ENCODE measurements at regions of chr17 and their contacts with region 1.

Region 1: DNA sequence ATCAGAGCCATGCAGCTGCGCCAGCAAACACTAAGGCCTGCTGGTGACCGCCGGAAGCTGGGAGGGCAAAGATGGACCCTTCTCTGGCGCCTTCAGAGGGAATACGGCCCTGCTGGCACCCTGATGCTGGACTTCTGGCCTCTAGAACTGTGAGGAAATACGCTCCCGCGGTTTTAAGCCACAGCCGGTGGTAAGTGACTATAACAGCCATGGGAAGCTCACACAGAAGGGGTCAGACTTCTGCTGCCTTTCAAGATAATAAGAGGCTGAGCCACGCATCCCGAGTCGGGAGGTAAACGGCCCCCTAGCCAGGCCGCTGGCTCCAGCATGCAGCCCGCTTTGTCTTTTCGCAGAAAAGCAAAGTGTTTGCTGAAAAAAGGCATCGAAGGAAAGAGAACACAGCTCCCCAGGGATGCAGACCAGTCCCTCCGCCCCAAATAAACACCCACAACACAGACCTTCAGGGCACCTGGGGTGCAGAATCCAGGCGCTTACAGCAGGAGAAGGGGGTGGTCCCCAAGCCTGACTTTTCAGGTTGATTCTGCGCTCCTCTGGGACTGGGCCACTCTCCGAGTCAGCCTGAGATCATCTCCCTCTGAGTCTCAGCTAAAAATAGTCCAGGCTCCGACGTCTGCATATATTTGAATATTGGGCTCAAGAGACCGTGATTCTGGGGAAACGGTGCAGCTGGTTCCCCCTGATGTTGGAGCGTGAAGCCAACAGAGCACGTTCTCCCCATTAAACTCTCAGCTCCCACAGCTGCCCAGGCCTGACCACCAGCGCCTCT is 89.7 kb downstream of the MGAT5B start:
- DNase-seq: peak; percentile 89
- H3K4me3 ChIP-seq: peak overlapping the region; percentile 61
- H3K27ac ChIP-seq: peak overlapping the region; percentile 58
- H3K4me1 ChIP-seq: peaks cover 29% of the 10 kb centered on the region
- CTCF ChIP-seq: 0 out of 2 replicates have a peak, but pooled peaks have one; percentile 8

Region 2: DNA sequence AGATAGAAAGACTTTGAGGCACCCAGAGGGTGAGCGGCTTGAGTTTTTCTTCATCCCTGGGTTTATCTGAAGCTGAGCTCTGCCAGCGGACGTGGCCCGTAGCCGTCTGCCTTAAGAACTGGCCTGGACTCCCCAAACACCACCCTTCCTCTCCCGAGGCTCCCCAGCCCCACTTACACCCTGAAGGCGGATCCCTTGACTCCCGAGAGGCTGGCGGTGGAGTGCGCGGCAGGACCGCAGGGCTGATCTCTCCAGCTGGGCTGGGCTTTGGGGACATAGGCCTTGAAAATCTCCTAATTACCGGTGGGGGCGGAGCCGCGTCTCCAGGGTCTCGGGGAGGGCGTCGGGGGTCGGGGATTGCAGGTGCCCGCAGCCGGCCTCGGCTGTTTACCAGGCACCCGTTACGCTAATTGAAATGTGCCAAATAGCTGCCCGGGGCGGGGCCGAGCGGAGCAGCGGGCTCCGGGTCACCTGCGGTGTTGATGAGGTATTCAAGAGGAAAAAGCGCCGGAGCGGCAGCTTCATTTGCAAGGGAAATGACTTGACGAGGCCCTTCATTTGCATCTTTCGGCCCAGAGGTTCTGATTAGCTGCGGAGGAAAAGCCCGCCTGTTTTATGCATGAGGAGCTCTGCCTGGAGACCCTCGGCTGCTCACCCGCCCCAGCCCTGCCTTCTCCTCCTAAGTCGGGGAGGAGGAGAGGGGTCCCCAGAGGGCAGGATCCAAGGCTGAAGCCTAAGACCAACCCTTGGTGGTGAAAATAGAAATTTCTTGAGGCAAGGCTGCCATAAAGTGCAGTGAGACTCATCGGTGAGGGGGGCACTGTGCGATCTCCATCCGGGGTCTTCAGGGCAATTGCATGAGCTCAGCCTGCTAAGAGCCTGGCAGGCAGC is 11.1 kb after region 1 on chr17:
- CTCF ChIA-PET with region 1: interaction called, 4 read pairs
- POLR2A ChIA-PET with region 1: interaction called, 40 read pairs
- intact Hi-C with region 1: no loop called
- DNase-seq: peak; percentile 100
- H3K4me3 ChIP-seq: peak overlapping the region; percentile 76
- H3K27ac ChIP-seq: peak overlapping the region; percentile 86
- H3K4me1 ChIP-seq: peaks cover 44% of the 10 kb centered on the region
- CTCF ChIP-seq: peak; percentile 43; the same call in 1 of the 2 replicates

Region 3: GRCh38 chr17:77027271-77027670 is 69.4 kb after region 1 on chr17:
- CTCF ChIA-PET with region 1: no interaction called
- POLR2A ChIA-PET with region 1: no interaction called
- intact Hi-C with region 1: no loop called
- DNase-seq: no peak
- H3K4me3 ChIP-seq: no peak overlapping the region
- H3K27ac ChIP-seq: no peak overlapping the region
- H3K4me1 ChIP-seq: no peaks in the 10 kb centered on the region
- CTCF ChIP-seq: no peak